Cardiac septum (tissue), 1 donor: ENCODE measurements at regions of chr5 and their contacts with region 1.

Region 1: GRCh38 chr5:181159286-181159829 is 12.0 kb downstream of the OR2V2 start:
- DNase-seq: peak; percentile 92

Region 2: GRCh38 chr5:180784497-180785097 is 374.8 kb before region 1 on chr5:
- intact Hi-C with region 1: loop called (anchors 5 kb)
- DNase-seq: peak; percentile 88

Region 3: GRCh38 chr5:180831139-180832048 is 328.0 kb before region 1 on chr5:
- intact Hi-C with region 1: no loop called
- DNase-seq: peak; percentile 97